PC-9 (cell line): ENCODE measurements at regions of chr1 and their contacts with region 1.

Region 1: GRCh38 chr1:22788254-22788661 is 77.6 kb downstream of the EPHB2 start:
- DNase-seq: peak in 1 of 2 experiments; percentile 31
- H3K4me3 ChIP-seq: no peak overlapping the region
- H3K27ac ChIP-seq: no peak overlapping the region
- H3K4me1 ChIP-seq: no peaks in the 10 kb centered on the region
- H3K27me3 ChIP-seq: no peaks in the 10 kb centered on the region
- CTCF ChIP-seq: no peak

Region 2: GRCh38 chr1:22262583-22262982 is 525.7 kb before region 1 on chr1:
- CTCF ChIA-PET with region 1: no interaction called
- POLR2A ChIA-PET with region 1: no interaction called
- intact Hi-C with region 1: no loop called
- DNase-seq: no peak
- H3K4me3 ChIP-seq: no peak overlapping the region
- H3K27ac ChIP-seq: no peak overlapping the region
- H3K4me1 ChIP-seq: peaks cover 50% of the 10 kb centered on the region
- H3K27me3 ChIP-seq: no peaks in the 10 kb centered on the region
- CTCF ChIP-seq: no peak

Region 3: DNA sequence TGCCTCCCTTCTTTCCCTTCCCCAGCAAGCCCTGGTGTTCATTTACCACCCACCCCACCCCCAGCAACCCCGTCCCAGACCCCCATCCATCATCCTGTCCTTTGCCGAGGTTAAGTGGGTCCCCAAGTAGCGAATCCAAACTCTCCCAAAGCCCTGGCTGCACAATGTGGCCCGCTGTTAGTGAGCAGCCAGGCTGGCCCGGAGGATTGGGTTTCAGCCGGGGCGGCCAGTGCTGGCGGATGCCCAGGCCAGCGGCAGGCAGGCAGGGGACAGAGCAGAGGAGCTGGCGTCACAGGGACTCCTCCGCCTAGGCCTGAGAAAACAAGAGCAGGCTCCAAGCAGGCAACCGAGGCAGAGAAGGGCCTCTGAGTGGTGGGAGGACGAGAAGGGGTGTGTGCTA is 16.2 kb before region 1 on chr1:
- CTCF ChIA-PET with region 1: no interaction called
- POLR2A ChIA-PET with region 1: no interaction called
- intact Hi-C with region 1: no loop called
- DNase-seq: no peak
- H3K4me3 ChIP-seq: no peak overlapping the region
- H3K27ac ChIP-seq: no peak overlapping the region
- H3K4me1 ChIP-seq: no peaks in the 10 kb centered on the region
- H3K27me3 ChIP-seq: no peaks in the 10 kb centered on the region
- CTCF ChIP-seq: no peak

Region 4: GRCh38 chr1:22949822-22950331 is 161.6 kb after region 1 on chr1:
- CTCF ChIA-PET with region 1: no interaction called
- POLR2A ChIA-PET with region 1: interaction called, 16 read pairs
- intact Hi-C with region 1: no loop called
- DNase-seq: no peak
- H3K4me3 ChIP-seq: no peak overlapping the region
- H3K27ac ChIP-seq: no peak overlapping the region
- H3K4me1 ChIP-seq: no peaks in the 10 kb centered on the region
- H3K27me3 ChIP-seq: no peaks in the 10 kb centered on the region
- CTCF ChIP-seq: no peak

Region 5: GRCh38 chr1:23026573-23026972 is 238.3 kb after region 1 on chr1:
- CTCF ChIA-PET with region 1: no interaction called
- POLR2A ChIA-PET with region 1: no interaction called
- intact Hi-C with region 1: no loop called
- DNase-seq: peak in 1 of 2 experiments; percentile 69
- H3K4me3 ChIP-seq: peak overlapping the region; percentile 31; the same call in 1 of the 2 replicates
- H3K27ac ChIP-seq: peak overlapping the region; percentile 61
- H3K4me1 ChIP-seq: peaks cover 90% of the 10 kb centered on the region
- H3K27me3 ChIP-seq: no peaks in the 10 kb centered on the region
- CTCF ChIP-seq: no peak

Region 6: GRCh38 chr1:23062271-23062670 is 274.0 kb after region 1 on chr1:
- CTCF ChIA-PET with region 1: no interaction called
- POLR2A ChIA-PET with region 1: no interaction called
- intact Hi-C with region 1: no loop called
- DNase-seq: no peak
- H3K4me3 ChIP-seq: no peak overlapping the region
- H3K27ac ChIP-seq: peak overlapping the region; percentile 29; the same call in 1 of the 2 replicates
- H3K4me1 ChIP-seq: no peaks in the 10 kb centered on the region
- H3K27me3 ChIP-seq: no peaks in the 10 kb centered on the region
- CTCF ChIP-seq: no peak